Spleen (tissue), 13 donors: ENCODE measurements at regions of chr3 and their contacts with region 1.

Region 1: DNA sequence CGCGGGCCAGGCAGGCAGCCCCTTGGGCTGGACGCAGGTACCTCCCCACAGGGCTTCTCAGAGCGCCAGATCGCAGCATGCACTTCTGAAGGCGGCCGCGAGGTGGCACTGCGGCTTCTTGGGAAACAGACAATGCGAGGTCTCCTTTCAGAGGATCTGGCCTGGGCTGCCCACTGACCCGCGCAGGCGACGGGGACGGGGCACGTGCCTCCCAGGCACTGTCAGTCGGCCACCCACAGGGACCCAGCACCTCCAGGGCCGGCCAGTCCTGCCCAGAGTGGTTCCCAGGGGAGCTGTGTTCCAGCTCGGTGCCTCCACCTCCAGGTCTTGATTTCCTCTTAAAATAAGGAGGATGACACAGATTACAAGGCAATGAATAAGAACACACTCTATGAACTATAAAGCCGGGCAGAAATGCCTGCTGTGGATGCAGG is 24.4 kb upstream of the TXNRD3 start:
- DNase-seq: peak; percentile 93
- H3K4me3 ChIP-seq: peak overlapping the region in 1 of 8 donors; percentile 45
- H3K27ac ChIP-seq: no peak overlapping the region
- H3K4me1 ChIP-seq: peaks cover 0 to 33% (median 14%) of the 10 kb centered on the region in 6 donors
- H3K27me3 ChIP-seq: peaks cover 0 to 33% (median 0%) of the 10 kb centered on the region in 7 donors
- CTCF ChIP-seq: peak; percentile 84 to 99 (median 96)
- POLR2A ChIP-seq: no peak

Region 2: DNA sequence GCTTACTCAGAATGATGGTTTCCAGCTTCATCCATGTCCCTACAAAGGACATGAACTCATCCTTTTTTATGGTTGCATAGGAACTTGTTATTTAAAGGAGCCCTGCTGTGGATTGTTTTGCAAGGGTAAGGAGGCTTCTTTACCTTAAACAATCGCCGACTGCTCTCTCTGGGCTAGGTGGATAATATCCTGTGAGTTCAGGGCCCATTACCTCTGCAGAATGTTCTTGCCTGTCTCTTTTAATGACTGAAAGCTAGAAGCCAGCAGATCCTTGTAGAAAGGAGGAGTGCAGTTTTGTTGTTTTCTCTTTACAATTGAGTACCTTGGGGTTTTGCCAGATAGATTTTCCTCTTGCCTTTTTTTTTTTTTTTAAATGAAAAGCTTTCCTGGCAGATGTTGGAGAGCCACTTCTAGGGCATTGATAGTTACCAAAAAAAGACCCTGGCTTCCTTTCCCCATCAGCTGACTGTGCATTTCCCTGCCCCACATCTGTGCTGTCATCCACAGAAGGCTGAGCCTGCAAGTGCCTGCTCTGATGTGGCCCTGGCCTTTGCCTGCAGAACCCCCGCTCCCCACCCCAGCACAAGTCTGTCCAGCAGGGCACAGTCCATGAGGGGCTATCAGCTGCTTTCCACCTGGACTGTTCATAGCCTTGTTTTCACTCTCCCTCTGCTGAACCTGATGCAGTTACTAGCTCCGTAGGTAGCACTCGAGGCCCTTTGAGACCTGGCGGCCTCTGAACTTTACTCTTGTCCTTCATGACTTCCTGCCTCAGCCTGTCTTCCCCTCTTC is 137.8 kb after region 1 on chr3:
- intact Hi-C with region 1: no loop called
- DNase-seq: no peak
- H3K4me3 ChIP-seq: no peak overlapping the region
- H3K27ac ChIP-seq: peak overlapping the region in 6 of 8 donors; percentile 4 to 64 (median 28)
- H3K4me1 ChIP-seq: peaks cover 4 to 30% (median 13%) of the 10 kb centered on the region in 6 donors
- H3K27me3 ChIP-seq: no peaks in the 10 kb centered on the region
- CTCF ChIP-seq: no peak
- POLR2A ChIP-seq: no peak

Region 3: DNA sequence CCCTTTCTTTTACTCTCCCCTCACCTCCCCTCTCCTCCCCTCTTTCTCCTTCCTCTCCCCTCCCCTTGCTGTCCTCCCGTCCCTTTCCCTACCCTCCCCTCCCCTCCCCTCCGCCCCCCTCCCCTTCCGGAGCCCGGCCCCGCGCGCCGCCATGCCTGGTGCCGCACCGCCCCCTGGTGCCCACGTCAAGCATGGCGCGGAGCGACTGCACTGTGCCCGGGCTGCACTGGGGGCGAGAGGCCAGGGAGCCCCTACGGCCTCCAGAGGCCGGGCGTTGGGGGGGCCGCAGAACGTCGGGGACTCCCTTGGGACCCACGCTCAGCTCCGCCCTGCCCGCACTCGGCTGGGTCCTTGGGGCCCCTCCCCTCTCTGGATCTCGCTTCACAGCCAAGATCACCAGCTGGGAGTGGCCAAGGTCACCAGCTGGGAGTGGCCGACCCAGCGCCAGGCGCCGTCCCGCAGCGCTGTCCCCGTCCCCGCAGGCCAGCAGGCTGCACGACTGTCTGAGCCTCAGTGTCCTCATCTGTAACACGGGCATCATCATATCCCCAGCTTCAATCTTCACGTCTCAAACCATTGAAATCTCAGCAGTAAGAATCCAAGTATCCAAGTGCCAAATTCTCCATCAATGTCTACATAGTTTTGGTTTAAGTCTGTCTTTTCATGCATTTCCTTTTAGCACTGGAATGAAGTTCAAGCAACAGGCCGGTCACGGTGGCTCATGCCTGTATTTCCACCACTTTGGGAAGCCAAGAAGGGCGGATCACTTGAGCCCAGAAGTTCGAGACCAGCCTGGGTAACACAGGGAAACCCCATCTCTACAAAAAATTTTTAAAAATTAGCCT is 868.6 kb after region 1 on chr3:
- intact Hi-C with region 1: loop called (anchors 5 kb)
- DNase-seq: peak; percentile 93
- H3K4me3 ChIP-seq: peak overlapping the region; percentile 41 to 81 (median 55)
- H3K27ac ChIP-seq: peak overlapping the region in 6 of 8 donors; percentile 19 to 80 (median 63)
- H3K4me1 ChIP-seq: peaks cover 0 to 29% (median 16%) of the 10 kb centered on the region in 6 donors
- H3K27me3 ChIP-seq: no peaks in the 10 kb centered on the region
- CTCF ChIP-seq: peak; percentile 32 to 90 (median 75)
- POLR2A ChIP-seq: no peak